ENCODE measurements at regions of chr4 and their contacts with region 1.

Region 1: DNA sequence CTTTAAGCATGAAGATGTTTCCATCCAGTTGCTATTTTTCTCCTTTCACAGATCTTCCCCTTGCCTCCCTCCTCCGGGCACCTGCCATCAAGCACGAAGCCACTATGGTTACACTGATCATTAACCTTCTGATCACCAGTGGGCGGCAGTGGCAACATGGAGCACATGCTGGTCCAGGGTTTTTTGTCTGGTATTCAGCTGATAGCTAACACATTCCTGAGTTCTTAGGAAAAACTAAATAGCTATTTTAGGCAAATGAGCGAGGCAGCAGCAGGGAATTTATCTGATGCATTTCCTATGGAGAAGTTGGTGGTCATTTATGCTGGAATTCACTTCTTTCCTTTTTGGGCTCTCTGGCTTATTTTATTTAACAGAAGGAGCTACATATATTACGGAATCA is 22.9 kb downstream of the SHISA3 start:
- DNase-seq: no peak
- ATAC-seq: no peak
- H3K4me3 Mint-ChIP-seq: no peak overlapping the region
- H3K27ac Mint-ChIP-seq: no peak overlapping the region
- H3K4me1 Mint-ChIP-seq: no peaks in the 10 kb centered on the region
- H3K27me3 Mint-ChIP-seq: no peaks in the 10 kb centered on the region

Region 2: DNA sequence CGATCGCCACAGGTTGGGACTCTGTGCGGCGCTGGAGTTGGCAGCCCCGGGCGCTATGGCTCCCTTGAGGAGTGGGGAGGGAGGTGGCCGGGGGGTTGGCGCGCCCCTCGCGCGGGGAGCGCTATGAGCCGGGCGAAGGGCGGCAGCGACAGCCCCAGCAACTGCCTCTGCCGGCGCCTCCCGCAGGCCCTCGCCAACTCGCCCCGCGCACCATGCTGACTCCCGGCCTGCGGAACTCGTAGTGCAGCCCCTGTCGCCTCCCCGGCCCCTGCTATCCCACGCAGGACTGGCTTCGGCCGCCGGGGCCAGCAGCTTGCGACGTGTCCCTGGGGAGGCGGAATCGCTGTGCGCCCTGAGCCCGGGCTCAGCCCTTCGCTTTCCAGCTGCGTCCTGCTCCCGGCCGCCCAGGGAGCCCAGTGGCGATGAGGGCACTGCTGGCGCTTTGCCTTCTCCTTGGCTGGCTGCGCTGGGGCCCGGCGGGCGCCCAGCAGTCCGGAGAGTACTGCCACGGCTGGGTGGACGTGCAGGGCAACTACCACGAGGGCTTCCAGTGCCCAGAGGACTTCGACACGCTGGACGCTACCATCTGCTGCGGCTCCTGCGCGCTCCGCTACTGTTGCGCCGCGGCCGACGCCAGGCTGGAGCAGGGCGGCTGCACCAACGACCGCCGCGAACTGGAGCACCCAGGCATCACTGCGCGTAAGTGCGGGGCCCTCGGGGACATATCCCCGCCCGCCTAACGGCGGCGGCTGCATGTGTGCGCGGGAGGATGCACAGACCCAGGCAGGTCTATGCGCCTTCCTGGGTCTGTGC is 22.3 kb before region 1 on chr4:
- CTCF ChIA-PET with region 1: no interaction called
- POLR2A ChIA-PET with region 1: no interaction called
- intact Hi-C with region 1: loop called in 1 of 2 experiments (anchors 2 kb)
- DNase-seq: peak; percentile 57
- ATAC-seq: peak; percentile 63
- H3K4me3 Mint-ChIP-seq: peak overlapping the region; percentile 65
- H3K27ac Mint-ChIP-seq: no peak overlapping the region
- H3K4me1 Mint-ChIP-seq: peaks cover 22% of the 10 kb centered on the region
- H3K27me3 Mint-ChIP-seq: peaks cover 58% of the 10 kb centered on the region

Measured in activated CD4-positive, alpha-beta T cell treated with anti-CD3 and anti-CD28 coated beads for 36 hours (primary cell).